A549 (cell line): ENCODE measurements at regions of chr19 and their contacts with region 1.

Region 1: DNA sequence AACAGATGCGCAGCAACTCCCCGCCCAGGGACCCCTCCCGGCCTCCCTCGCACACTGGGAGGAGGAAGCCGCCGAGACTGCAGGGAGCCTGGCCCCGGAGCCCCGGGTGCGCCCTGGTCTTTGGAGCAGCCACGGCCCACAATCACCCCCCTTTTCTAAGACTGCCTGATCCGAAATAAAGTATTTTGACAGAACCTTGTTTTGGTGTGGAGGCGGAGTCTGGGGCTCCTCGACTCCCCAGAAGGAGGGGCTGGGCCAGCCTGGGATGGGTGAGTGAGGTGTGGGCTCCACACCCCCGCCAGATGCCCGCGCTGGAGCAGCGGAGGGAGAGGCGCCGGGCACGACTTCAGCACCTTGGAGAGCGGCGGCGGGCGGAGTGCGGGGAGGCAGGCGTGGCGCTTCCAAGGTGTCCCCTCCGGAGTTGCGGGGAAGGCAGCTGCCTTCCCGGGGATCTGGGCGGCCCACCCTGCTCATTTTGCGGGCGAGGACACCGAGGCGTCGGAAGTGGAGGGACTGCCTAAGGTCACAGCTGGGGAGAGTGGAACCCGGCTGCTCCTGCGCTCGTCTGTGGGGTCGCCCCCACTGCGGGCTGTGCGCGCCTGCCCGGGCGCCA is 9.4 kb downstream of the SIRT6 start:
- DNase-seq: peak in 1 of 2 experiments; percentile 17
- ATAC-seq: peak; percentile 86 to 87
- H3K4me3 ChIP-seq: no peak overlapping the region
- H3K27ac ChIP-seq: no peak overlapping the region
- H3K4me1 ChIP-seq: peaks cover 8% of the 10 kb centered on the region; the same call in 2 of the 3 replicates
- CTCF ChIP-seq: no peak
- EP300 ChIP-seq: no peak
- POLR2A ChIP-seq: no peak
- RAD21 ChIP-seq: no peak

Region 2: GRCh38 chr19:4103073-4103418 is 69.9 kb before region 1 on chr19:
- CTCF ChIA-PET with region 1: no interaction called
- POLR2A ChIA-PET with region 1: no interaction called
- DNase-seq: no peak
- ATAC-seq: peak; percentile 22 to 25; a peak in 1 of 6 replicates
- H3K4me3 ChIP-seq: no peak overlapping the region
- H3K27ac ChIP-seq: peak overlapping the region in 1 of 2 experiments; percentile 4; a peak in 1 of 6 replicates
- H3K4me1 ChIP-seq: no peaks in the 10 kb centered on the region; the same call in 2 of the 3 replicates
- CTCF ChIP-seq: no peak
- EP300 ChIP-seq: no peak
- POLR2A ChIP-seq: no peak
- RAD21 ChIP-seq: no peak

Region 3: DNA sequence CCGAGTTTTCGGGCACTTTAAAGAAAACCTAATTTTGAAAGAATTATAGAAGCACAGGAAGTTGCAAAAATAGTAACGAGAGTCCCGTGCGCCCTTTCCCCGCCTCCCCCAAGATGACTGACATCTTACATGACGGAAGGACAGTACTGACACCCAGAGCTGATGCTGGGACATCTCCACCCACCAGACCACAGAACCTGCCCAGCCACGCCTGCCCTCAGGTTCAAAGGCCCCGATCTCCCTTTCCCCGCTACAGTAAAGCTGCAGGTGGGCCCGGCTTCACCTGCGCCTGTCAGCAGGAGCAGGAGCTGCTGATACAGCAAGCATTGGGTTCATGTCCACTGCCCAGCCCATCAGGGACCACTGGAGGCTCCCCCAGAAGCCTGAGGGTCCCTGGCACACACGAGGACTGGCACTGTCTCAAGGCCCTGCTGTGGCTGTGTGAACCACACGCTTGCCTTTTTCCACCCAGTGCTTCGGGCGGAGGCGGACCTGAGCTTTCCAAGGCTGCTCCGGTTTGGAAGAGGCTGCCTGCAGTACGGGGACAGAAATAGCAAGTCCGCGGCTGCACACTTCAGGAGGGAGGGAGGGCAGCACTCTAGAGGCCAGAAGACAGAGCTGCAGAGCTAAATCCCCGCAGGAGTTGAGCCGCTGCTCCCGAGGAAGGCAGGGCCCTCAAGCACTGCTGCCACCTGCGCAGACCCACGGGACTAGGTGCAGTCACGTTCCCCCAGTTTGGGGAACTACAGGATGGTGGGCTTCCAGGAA is 57.7 kb before region 1 on chr19:
- CTCF ChIA-PET with region 1: no interaction called
- POLR2A ChIA-PET with region 1: no interaction called
- DNase-seq: no peak
- ATAC-seq: no peak; a peak in 1 of 6 replicates
- H3K4me3 ChIP-seq: no peak overlapping the region
- H3K27ac ChIP-seq: no peak overlapping the region
- H3K4me1 ChIP-seq: no peaks in the 10 kb centered on the region
- CTCF ChIP-seq: no peak
- EP300 ChIP-seq: no peak
- POLR2A ChIP-seq: no peak
- RAD21 ChIP-seq: no peak

Region 4: DNA sequence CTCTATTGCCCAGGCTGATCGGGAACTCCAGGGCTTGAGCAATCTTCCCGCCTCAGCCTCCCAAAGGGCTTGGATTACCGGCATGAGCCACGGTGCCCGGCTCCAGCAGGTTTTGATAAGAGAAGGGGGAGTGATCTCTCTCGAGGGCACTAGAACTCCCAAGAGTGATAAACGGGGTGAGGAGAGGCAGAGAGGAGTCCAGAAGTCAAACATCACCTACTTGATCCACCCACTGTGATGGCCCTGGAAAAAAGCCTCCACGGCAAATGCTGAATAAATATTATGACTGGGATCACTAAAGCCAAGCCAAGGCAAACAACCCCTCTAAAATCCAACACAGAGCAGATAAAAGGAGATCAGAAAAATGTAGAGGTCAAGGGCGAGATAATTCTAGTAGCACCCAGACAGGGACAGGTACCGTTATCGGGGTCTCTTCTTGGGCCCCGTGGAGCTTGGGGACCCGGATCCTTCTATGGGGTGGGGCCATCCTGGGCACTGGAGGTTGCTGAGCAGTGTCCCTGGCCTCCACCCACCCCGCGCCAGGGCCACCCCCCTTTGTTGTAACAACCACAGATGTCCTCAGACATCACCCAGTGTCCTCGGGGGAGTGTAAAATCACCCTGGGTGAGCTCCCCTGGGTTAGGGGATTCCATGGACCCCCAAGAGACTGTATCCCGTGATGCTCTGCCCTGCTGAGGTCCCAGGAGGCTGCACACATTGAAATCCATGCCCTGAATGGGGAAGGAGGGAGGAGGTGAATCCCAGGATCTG is 23.3 kb before region 1 on chr19:
- CTCF ChIA-PET with region 1: interaction called, 7 read pairs
- POLR2A ChIA-PET with region 1: interaction called, 11 read pairs
- DNase-seq: peak in 1 of 2 experiments; percentile 65
- ATAC-seq: peak in 1 of 2 experiments; percentile 21; a peak in 3 of 6 replicates
- H3K4me3 ChIP-seq: no peak overlapping the region
- H3K27ac ChIP-seq: peak overlapping the region; percentile 60 to 64
- H3K4me1 ChIP-seq: peaks cover 33% of the 10 kb centered on the region
- CTCF ChIP-seq: no peak
- EP300 ChIP-seq: no peak
- POLR2A ChIP-seq: no peak
- RAD21 ChIP-seq: no peak